CD8-positive, alpha-beta T cell (primary cell): ENCODE measurements at regions of chr7 and their contacts with region 1.

Region 1: GRCh38 chr7:5494683-5495561 is 71.3 kb upstream of the TNRC18 start:
- DNase-seq: peak; percentile 56 to 87 (median 79)
- ATAC-seq: peak; percentile 87
- H3K4me3 ChIP-seq: peak overlapping the region; percentile 29 to 48
- H3K4me3 Mint-ChIP-seq: peak overlapping the region; percentile 54
- H3K27ac ChIP-seq: no peak overlapping the region
- H3K27ac Mint-ChIP-seq: peak overlapping the region; percentile 62
- H3K4me1 ChIP-seq: peaks cover 28% of the 10 kb centered on the region
- H3K4me1 Mint-ChIP-seq: peaks cover 34% of the 10 kb centered on the region
- H3K27me3 ChIP-seq: no peaks in the 10 kb centered on the region
- H3K27me3 Mint-ChIP-seq: no peaks in the 10 kb centered on the region
- CTCF ChIP-seq: peak; percentile 93

Region 2: GRCh38 chr7:5507013-5507412 is 12.1 kb after region 1 on chr7:
- CTCF ChIA-PET with region 1: interaction called, 39 read pairs
- POLR2A ChIA-PET with region 1: no interaction called
- intact Hi-C with region 1: no loop called
- DNase-seq: no peak
- ATAC-seq: no peak
- H3K4me3 ChIP-seq: no peak overlapping the region
- H3K4me3 Mint-ChIP-seq: no peak overlapping the region
- H3K27ac ChIP-seq: no peak overlapping the region
- H3K27ac Mint-ChIP-seq: no peak overlapping the region
- H3K4me1 ChIP-seq: no peaks in the 10 kb centered on the region
- H3K4me1 Mint-ChIP-seq: peaks cover 3% of the 10 kb centered on the region
- H3K27me3 ChIP-seq: no peaks in the 10 kb centered on the region
- H3K27me3 Mint-ChIP-seq: no peaks in the 10 kb centered on the region
- CTCF ChIP-seq: no peak

Region 3: DNA sequence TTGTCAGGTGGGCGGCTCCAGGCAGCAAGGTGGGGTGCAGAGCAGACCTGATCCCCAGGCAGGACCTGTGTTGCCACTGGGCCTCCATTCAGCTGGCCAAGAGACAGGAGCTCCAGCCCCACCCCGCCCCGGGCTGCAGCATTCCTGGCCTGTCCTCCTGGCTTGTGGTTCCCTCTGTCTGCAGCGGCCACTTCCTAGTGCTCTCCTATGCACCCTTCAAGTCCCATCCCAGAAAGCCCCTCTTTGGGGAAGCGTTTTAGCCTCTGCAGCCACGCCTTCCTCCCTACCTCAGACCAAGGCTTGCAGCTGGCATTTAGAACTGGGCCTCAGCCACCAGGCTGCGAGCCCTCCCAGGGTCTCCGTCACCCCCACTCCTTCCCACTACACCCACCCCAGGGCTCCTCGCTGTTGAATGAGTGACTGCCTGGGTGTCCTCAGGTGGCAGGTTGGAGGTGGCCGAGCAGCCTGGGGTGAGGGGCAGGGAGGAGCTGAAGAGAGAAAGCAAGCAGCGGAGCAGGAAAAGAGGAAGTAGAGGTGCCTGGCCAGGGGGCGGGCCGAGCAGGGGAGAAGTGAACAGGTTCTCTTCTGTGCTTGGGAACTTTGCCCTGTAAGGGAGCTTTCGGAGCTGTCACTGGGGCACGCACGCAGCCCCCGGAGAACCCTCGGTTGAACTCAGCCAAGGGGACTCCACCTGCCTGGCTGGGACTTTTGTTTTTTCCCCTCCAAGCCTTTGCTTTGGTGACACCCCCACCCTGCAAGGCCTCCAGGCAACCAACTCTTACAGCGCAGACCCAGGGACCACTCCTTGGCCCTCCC is 37.8 kb after region 1 on chr7:
- CTCF ChIA-PET with region 1: interaction called, 19 read pairs
- POLR2A ChIA-PET with region 1: interaction called, 4 read pairs
- intact Hi-C with region 1: loop called in 1 of 2 experiments (anchors 1 kb)
- DNase-seq: peak in 7 of 9 experiments; percentile 50 to 79 (median 59)
- ATAC-seq: no peak
- H3K4me3 ChIP-seq: peak overlapping the region; percentile 98
- H3K4me3 Mint-ChIP-seq: peak overlapping the region; percentile 87
- H3K27ac ChIP-seq: peak overlapping the region; percentile 41 to 94
- H3K27ac Mint-ChIP-seq: peak overlapping the region; percentile 96
- H3K4me1 ChIP-seq: peaks cover 12% of the 10 kb centered on the region
- H3K4me1 Mint-ChIP-seq: peaks cover 35% of the 10 kb centered on the region
- H3K27me3 ChIP-seq: no peaks in the 10 kb centered on the region
- H3K27me3 Mint-ChIP-seq: no peaks in the 10 kb centered on the region
- CTCF ChIP-seq: no peak

Region 4: GRCh38 chr7:5665094-5666025 is 170.4 kb after region 1 on chr7:
- CTCF ChIA-PET with region 1: interaction called, 54 read pairs
- POLR2A ChIA-PET with region 1: interaction called, 6 read pairs
- intact Hi-C with region 1: loop called (anchors 1 kb)
- DNase-seq: peak; percentile 25 to 82 (median 66)
- ATAC-seq: peak; percentile 80
- H3K4me3 ChIP-seq: no peak overlapping the region
- H3K4me3 Mint-ChIP-seq: no peak overlapping the region
- H3K27ac ChIP-seq: no peak overlapping the region
- H3K27ac Mint-ChIP-seq: no peak overlapping the region
- H3K4me1 ChIP-seq: peaks cover 15% of the 10 kb centered on the region
- H3K4me1 Mint-ChIP-seq: peaks cover 24% of the 10 kb centered on the region
- H3K27me3 ChIP-seq: no peaks in the 10 kb centered on the region
- H3K27me3 Mint-ChIP-seq: no peaks in the 10 kb centered on the region
- CTCF ChIP-seq: peak; percentile 92

Region 5: GRCh38 chr7:5677538-5678294 is 182.8 kb after region 1 on chr7:
- CTCF ChIA-PET with region 1: interaction called, 17 read pairs
- POLR2A ChIA-PET with region 1: no interaction called
- intact Hi-C with region 1: no loop called
- DNase-seq: peak in 6 of 9 experiments; percentile 17 to 66 (median 48)
- ATAC-seq: peak; percentile 54
- H3K4me3 ChIP-seq: no peak overlapping the region
- H3K4me3 Mint-ChIP-seq: no peak overlapping the region
- H3K27ac ChIP-seq: no peak overlapping the region
- H3K27ac Mint-ChIP-seq: peak overlapping the region; percentile 30
- H3K4me1 ChIP-seq: peaks cover 36% of the 10 kb centered on the region
- H3K4me1 Mint-ChIP-seq: peaks cover 58% of the 10 kb centered on the region
- H3K27me3 ChIP-seq: no peaks in the 10 kb centered on the region
- H3K27me3 Mint-ChIP-seq: no peaks in the 10 kb centered on the region
- CTCF ChIP-seq: peak; percentile 27

Region 6: DNA sequence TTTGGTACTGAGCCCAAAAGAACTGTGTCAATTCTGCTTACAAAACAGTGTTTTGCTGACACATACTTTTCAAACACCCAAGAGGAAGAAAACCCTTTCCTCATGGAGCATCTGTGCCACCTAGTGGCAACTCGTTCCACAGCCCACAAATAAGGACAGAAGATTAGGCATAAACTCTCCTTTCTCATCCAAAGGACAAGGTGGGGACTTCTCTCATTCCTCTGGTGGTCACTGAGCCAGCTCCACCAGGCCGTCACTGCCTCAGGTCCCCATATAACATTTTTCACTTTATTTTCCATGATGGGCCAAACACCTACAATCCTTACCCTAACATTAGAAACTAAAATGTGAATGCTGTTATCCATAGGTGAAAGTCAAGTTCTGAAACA is 209.6 kb after region 1 on chr7:
- CTCF ChIA-PET with region 1: interaction called, 103 read pairs
- POLR2A ChIA-PET with region 1: interaction called, 3 read pairs
- intact Hi-C with region 1: loop called (anchors 1 kb)
- DNase-seq: peak; percentile 53 to 87 (median 73)
- ATAC-seq: peak; percentile 18
- H3K4me3 ChIP-seq: no peak overlapping the region
- H3K4me3 Mint-ChIP-seq: no peak overlapping the region
- H3K27ac ChIP-seq: no peak overlapping the region
- H3K27ac Mint-ChIP-seq: no peak overlapping the region
- H3K4me1 ChIP-seq: peaks cover 27% of the 10 kb centered on the region
- H3K4me1 Mint-ChIP-seq: peaks cover 34% of the 10 kb centered on the region
- H3K27me3 ChIP-seq: no peaks in the 10 kb centered on the region
- H3K27me3 Mint-ChIP-seq: no peaks in the 10 kb centered on the region
- CTCF ChIP-seq: peak; percentile 87

Region 7: GRCh38 chr7:6323967-6324701 is 829.2 kb after region 1 on chr7:
- CTCF ChIA-PET with region 1: no interaction called
- POLR2A ChIA-PET with region 1: no interaction called
- intact Hi-C with region 1: loop called in 1 of 2 experiments (anchors 2 kb)
- DNase-seq: no peak
- ATAC-seq: no peak
- H3K4me3 ChIP-seq: no peak overlapping the region
- H3K4me3 Mint-ChIP-seq: no peak overlapping the region
- H3K27ac ChIP-seq: no peak overlapping the region
- H3K27ac Mint-ChIP-seq: no peak overlapping the region
- H3K4me1 ChIP-seq: no peaks in the 10 kb centered on the region
- H3K4me1 Mint-ChIP-seq: peaks cover 4% of the 10 kb centered on the region
- H3K27me3 ChIP-seq: no peaks in the 10 kb centered on the region
- H3K27me3 Mint-ChIP-seq: peaks cover 3% of the 10 kb centered on the region
- CTCF ChIP-seq: no peak